WTC11 (cell line): ENCODE measurements at regions of chr14 and their contacts with region 1.

Region 1: DNA sequence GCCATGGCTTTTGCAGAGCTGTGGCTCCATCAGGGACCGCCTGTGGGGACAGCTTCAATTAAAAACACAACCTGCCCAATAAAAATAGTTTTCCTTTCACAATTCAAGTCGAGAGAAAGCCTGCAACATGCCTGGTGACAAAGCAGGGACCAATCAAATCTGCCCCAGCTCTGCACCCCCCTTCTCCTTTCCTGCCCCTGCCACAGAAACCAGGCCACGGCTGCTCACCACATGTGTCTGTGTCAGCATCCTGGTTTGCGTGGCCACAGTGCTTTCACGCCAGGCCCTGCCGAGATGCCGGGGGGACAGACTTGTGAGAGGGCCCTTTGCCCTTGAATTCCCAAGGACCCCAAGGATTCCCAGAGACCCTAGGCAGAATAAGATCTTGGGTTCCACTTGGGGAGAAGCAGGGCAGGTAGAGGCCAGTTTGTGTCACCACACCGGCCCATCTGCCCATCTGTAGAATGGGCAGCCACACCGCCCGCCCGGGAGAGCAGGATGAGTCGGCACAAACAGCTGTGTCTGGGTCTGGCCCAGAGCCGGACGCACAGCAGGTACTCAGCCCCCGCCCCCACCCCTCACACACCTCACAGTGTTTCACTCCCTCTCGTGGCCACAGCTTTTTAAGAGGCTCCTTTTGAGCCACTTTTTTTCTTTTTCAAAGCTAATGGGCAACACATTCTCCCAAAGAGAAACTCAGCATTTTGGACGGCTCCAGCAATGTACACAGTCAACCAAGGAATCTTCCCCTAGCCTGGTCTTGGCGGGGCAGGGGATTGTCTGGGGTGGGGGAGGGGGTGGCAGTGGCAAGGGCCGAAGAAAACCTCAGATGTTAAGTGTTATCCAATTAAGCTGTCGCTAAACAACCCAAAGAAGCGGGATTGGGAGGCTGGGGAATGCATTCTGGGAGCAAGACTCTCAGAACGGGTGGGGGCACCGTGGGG is 41.5 kb downstream of the BCL11B start:
- DNase-seq: no peak
- ATAC-seq: no peak
- H3K4me3 Mint-ChIP-seq: peak overlapping the region; percentile 65
- H3K27ac Mint-ChIP-seq: peak overlapping the region; percentile 93
- H3K4me1 Mint-ChIP-seq: peaks cover 60% of the 10 kb centered on the region
- H3K27me3 Mint-ChIP-seq: no peaks in the 10 kb centered on the region
- CTCF ChIP-seq: no peak

Region 2: DNA sequence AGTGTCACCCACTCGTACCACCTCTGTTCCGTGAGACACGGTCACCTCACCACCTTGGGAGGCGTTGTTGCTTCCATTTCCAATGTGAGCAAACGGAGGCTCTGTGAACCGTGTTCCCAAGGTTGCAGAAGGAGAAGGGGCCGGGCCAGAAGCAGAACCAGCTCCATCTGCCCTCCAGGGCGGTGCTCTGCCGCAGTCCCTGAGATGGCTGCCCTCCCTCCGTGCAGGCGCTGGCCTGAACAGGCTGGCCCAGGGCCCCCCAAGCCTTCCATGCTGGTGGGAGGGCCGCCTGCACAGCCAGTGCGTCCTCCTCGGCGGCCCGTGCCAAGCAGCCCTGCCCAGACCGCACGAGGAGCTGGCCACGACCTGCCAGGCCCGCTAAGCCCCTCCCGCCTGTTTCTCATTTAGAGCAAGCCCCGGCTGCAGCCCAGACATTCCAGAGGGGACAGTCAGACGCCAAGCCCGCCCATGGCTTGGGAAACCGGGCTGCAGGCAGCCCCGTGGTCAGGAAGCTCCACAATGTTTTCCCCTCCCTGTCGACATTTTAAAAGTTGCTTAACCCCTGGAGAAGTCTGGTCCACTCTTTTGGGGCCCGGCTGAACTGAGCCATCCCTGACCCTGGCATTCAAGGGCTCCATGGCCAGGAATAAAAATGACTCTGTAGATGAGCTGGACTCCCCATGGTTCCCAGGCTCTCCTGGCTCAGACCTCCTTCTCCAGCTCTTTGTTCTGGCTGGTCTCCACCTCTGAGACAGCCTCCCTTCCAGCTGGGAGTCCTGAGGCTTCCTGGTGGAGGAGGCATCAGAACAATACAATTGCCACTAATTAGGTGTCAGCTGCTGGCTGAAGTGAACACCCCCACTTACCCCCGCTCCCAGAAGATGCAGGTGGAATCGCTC is 194.5 kb before region 1 on chr14:
- CTCF ChIA-PET with region 1: interaction called, 10 read pairs
- POLR2A ChIA-PET with region 1: no interaction called
- DNase-seq: peak; percentile 73
- ATAC-seq: peak; percentile 86
- H3K4me3 Mint-ChIP-seq: no peak overlapping the region
- H3K27ac Mint-ChIP-seq: no peak overlapping the region
- H3K4me1 Mint-ChIP-seq: peaks cover 23% of the 10 kb centered on the region
- H3K27me3 Mint-ChIP-seq: no peaks in the 10 kb centered on the region
- CTCF ChIP-seq: no peak

Region 3: DNA sequence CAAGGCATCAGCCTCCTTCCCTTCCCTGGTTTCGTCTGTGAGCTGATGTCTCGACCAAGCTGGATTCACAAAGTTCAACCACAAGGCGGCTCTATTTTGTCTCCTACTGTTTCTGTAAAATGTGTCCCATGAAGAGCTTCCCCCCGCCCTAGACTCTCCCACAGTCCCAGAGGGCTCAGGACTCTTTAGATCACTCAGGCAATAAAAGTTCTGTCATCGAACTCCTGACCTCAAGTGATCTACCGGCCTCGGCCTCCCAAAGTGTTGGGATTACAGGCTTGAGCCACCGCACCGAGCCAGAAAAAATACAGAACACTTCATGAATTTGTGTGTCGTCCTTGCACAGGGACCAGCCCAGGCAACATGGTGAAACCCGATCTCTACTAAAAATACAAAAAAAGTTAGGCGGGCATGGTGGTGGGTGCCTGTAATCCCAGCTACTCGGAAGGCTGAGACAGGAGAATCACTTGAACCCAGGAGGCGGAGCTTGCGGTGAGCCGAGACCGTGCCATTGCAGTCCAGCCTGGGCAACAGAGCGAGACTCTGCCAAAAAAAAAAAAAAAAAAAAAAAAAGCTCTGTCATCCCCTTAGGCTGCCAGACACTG is 107.9 kb before region 1 on chr14:
- CTCF ChIA-PET with region 1: interaction called, 10 read pairs
- POLR2A ChIA-PET with region 1: no interaction called
- DNase-seq: no peak
- ATAC-seq: peak; percentile 17
- H3K4me3 Mint-ChIP-seq: no peak overlapping the region
- H3K27ac Mint-ChIP-seq: peak overlapping the region; percentile 53; the same call in 1 of the 2 replicates
- H3K4me1 Mint-ChIP-seq: peaks cover 22% of the 10 kb centered on the region
- H3K27me3 Mint-ChIP-seq: peaks cover 8% of the 10 kb centered on the region
- CTCF ChIP-seq: no peak

Region 4: GRCh38 chr14:99188731-99189191 is 41.7 kb before region 1 on chr14:
- CTCF ChIA-PET with region 1: interaction called, 17 read pairs
- POLR2A ChIA-PET with region 1: no interaction called
- DNase-seq: peak; percentile 73
- ATAC-seq: peak; percentile 91
- H3K4me3 Mint-ChIP-seq: no peak overlapping the region
- H3K27ac Mint-ChIP-seq: 0 out of 2 replicates have a peak overlapping the region, but pooled peaks have one; percentile 57
- H3K4me1 Mint-ChIP-seq: peaks cover 52% of the 10 kb centered on the region
- H3K27me3 Mint-ChIP-seq: no peaks in the 10 kb centered on the region
- CTCF ChIP-seq: peak; percentile 48

Region 5: DNA sequence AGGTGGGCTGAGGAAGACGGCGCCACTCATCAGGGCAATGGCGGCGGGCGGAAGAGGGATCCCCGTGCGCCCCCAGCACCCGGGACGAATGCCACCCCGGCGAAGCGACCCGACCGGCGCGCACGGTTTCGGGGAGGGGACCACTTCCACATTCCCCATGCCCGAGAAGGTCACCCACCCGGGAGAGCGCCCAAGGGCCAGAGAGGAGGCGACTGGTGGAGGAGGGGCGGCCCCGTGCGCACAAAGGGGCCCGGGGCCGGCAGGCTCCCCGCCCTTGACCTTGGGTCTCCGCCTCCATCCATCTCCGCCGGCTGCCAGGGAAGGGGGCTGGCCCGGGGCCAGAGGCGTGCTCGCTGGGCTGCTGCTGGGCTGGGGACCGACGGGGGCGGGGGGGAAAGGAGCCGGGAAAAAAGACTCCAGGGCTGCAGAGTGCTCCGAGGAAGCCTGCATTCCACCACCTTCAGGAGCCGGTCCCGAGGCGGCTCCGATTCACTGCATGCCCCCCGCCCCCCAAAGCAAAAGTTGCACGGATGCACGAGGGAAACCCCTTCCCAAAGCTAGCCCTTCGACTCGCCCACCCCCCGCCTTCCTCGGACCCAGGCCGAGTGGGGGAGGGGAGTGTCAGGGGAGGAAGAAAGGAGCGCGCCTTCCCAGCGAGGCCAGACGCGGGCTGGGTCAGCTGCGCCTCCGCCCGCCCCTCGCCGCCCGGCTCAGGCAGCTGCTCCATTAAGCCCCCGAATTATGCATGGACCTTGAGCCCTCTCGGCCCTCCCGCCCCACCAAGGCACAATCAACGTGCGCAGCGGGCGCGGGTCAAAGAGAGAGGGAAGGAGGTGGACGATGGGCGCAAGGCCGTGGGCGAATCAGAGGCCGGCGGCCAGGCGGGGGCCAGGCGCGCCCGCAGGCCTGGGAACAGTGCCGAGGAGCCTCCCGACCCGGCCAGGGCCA is 15.4 kb after region 1 on chr14:
- CTCF ChIA-PET with region 1: interaction called, 14 read pairs
- POLR2A ChIA-PET with region 1: interaction called, 10 read pairs
- DNase-seq: peak; percentile 88
- ATAC-seq: peak; percentile 69
- H3K4me3 Mint-ChIP-seq: peak overlapping the region; percentile 73
- H3K27ac Mint-ChIP-seq: peak overlapping the region; percentile 97
- H3K4me1 Mint-ChIP-seq: peaks cover 78% of the 10 kb centered on the region
- H3K27me3 Mint-ChIP-seq: no peaks in the 10 kb centered on the region
- CTCF ChIP-seq: no peak